Adrenal gland (tissue), 19 donors: ENCODE measurements at regions of chr7 and their contacts with region 1.

Region 1: DNA sequence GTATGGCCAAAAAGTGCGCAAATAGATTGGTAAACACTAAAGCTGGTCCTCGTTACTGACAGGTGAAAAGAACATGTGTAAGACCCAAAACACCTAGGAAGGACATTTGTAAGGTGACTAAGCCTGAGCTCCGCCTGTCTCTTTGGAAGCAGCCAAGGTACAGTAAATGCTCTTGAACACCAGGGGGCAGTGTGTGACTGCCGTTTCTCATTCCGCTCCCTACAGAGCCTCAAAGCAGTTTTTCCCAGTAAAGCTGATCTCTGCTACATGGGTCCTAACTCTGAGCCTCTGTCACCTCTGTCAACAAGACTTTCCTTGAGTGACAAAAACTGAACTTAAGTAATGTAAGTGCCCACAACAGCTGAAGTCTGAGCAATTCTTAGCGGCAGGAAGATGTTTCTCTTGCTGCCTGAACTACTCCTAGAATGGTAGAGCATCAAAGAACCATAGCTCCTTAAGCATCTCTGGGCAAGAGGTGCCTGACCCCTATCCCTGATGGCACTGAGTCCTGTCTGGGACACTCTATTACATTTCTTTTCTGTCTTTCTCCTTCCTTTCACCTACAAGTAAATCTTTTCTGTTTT is 238.0 kb upstream of the INHBA start:
- DNase-seq: peak; percentile 67 to 89 (median 74)
- H3K4me3 ChIP-seq: no peak overlapping the region
- H3K27ac ChIP-seq: no peak overlapping the region
- H3K4me1 ChIP-seq: no peaks in the 10 kb centered on the region
- H3K27me3 ChIP-seq: peaks cover 3% of the 10 kb centered on the region
- CTCF ChIP-seq: peak; percentile 80 to 89 (median 85)
- POLR2A ChIP-seq: no peak

Region 2: DNA sequence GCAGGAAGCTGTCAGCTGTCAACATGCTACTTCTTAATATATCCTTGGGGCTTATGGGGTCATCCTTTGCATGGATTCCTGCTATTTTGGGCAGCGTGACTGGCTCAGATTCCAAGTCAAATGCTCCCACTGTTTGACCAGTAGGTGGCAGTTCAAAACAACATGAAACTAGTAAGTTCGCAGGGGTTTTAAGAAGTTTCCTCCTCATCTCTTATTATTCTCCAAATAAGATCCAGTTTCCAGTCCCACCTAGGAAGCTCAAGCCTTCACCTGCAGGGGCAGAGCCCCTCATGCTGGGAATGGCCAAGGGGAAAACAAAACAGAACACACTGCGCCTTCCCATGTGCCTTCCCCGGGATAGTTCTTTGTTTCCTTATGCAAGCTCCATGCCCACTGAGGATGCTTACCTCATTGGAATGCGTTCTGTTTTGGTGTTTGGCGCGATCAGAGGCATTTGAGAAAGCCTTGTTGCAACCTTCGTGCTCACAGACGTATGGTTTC is 36.3 kb after region 1 on chr7:
- intact Hi-C with region 1: loop called in 1 of 2 experiments (anchors 5 kb)
- DNase-seq: peak in 4 of 7 donors; percentile 30 to 63 (median 37)
- H3K4me3 ChIP-seq: no peak overlapping the region
- H3K27ac ChIP-seq: no peak overlapping the region
- H3K4me1 ChIP-seq: no peaks in the 10 kb centered on the region
- H3K27me3 ChIP-seq: no peaks in the 10 kb centered on the region
- CTCF ChIP-seq: peak; percentile 48 to 73 (median 56)
- POLR2A ChIP-seq: no peak

Region 3: GRCh38 chr7:42690794-42691639 is 750.2 kb after region 1 on chr7:
- intact Hi-C with region 1: loop called in 1 of 2 experiments (anchors 10 kb)
- DNase-seq: peak in 5 of 7 donors; percentile 19 to 44 (median 33)
- H3K4me3 ChIP-seq: no peak overlapping the region
- H3K27ac ChIP-seq: no peak overlapping the region
- H3K4me1 ChIP-seq: no peaks in the 10 kb centered on the region
- H3K27me3 ChIP-seq: no peaks in the 10 kb centered on the region
- CTCF ChIP-seq: peak; percentile 13 to 49 (median 46)
- POLR2A ChIP-seq: no peak

Region 4: DNA sequence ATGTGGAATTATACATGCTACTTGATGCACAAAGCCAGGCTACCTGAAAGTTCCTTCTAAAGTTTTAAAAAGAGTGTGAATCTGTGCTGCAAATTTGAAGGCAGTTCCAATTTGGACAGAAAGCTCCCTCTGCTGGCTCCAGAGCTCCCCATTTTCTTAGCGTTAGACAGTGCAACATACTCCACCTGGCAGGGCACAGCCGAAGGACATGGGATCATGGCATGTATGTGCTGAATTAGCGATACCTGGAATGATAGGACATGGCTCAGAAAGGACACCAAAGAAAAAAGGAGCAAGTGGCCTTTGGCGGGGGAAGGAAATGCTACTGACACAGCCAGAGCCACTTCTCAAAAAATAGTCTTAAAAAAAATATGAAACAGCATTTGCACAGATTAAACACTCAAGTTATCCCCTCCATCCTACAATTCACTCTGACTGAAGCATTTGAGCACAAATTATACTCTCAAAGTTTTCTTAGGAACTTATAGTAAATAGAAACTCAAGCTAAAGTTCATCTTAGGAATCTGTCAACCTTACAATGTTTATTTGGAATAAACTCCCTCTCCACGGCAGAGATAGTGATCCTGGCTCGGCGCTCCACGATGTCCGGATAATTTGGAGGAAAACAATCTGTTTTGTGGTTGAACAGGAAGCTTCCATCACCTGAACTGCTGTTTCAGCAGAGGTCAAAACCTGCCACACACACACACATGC is 891.0 kb after region 1 on chr7:
- intact Hi-C with region 1: loop called in 1 of 2 experiments (anchors 5 kb)
- DNase-seq: peak; percentile 27 to 69 (median 54)
- H3K4me3 ChIP-seq: peak overlapping the region in 1 of 4 donors; percentile 17
- H3K27ac ChIP-seq: no peak overlapping the region
- H3K4me1 ChIP-seq: peaks cover 0 to 4% of the 10 kb centered on the region in 2 donors
- H3K27me3 ChIP-seq: no peaks in the 10 kb centered on the region
- CTCF ChIP-seq: peak; percentile 36 to 72 (median 58)
- POLR2A ChIP-seq: no peak

Region 5: GRCh38 chr7:42843205-42843800 is 902.5 kb after region 1 on chr7:
- intact Hi-C with region 1: loop called in 1 of 2 experiments (anchors 10 kb)
- DNase-seq: peak in 6 of 7 donors; percentile 26 to 67 (median 46)
- H3K4me3 ChIP-seq: no peak overlapping the region
- H3K27ac ChIP-seq: no peak overlapping the region
- H3K4me1 ChIP-seq: no peaks in the 10 kb centered on the region
- H3K27me3 ChIP-seq: no peaks in the 10 kb centered on the region
- CTCF ChIP-seq: peak; percentile 23 to 55 (median 46)
- POLR2A ChIP-seq: no peak

Region 6: DNA sequence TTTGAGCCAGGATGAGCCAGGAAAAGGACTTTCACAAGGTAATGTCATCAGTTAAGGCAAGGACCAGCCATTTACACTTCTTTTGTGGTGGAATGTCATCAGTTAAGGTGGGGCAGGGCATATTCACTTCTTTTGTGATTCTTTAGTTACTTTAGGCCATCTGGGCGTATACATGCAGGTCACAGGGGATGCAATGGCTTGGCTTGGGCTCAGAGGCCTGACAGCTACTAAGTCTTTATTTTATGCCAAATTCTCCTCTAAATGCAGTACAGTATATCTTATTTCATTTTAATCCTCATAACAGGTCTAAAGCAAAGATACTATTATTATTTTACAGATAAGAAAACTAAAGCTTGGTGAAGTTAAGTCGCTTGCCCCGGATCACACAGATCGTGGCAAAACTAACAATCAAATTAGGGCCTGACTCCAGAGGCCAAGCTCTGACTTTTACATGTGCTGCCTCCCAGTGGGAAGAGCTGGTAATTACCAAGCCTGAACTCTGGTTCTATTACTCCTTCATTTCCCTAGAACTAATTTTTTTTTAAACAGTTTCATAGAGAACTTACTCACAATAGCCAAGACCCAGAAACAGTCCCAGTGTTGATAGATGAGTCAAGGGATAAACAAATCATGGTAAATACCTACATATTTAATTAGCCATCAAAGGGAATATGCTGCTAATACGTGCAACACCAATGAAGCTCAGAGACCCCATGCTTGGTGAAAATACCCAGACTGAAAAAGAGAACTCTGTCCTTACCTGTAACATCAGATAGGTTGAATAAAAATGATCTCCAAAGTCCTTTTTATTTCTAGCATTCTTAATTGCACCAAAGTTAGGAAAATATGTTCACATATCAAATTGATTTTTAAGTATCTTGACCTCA is 935.6 kb after region 1 on chr7:
- intact Hi-C with region 1: loop called in 1 of 2 experiments (anchors 5 kb)
- DNase-seq: peak; percentile 60 to 80 (median 72)
- H3K4me3 ChIP-seq: no peak overlapping the region
- H3K27ac ChIP-seq: no peak overlapping the region
- H3K4me1 ChIP-seq: no peaks in the 10 kb centered on the region
- H3K27me3 ChIP-seq: no peaks in the 10 kb centered on the region
- CTCF ChIP-seq: peak; percentile 66 to 80 (median 76)
- POLR2A ChIP-seq: no peak